ENCODE measurements at regions of chr11 and their contacts with region 1.

Region 1: DNA sequence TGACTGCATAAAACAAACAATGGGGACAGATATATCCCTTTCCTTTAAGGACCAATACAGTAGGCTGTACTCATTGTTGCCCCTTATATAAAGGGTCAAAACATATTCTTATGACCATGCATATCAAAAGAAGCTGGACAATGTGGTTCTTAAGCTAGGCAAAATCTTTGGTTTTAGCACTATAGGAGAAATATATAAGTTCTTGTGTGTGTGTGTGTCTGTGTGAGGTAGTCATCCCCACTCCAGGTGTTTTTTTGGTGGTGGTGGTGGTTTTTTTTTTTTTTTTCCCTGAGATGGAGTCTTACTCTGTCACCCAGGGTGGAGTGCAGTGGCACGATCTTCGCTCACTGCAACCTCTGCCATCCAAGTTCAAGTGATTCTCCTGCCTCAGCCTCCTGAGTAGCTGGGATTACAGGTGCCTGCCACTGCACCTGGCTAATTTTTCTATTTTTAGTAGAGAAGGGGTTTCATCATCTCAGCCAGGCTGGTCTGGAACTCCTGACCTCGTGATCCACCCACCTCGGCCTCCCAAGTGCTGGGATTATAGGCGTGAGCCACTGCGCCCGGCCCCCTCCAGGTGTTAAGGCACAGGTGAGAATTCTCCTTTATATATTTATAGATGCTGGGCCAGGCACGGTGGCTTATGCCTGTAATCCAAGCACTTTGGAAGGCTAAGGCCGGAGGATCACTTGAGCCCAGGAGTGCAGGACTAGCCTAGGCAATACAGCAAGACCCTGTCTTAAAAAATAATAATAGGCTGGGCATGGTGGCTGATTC is 12.0 kb upstream of the ZNF143 start:
- DNase-seq: no peak
- H3K4me3 ChIP-seq: no peak overlapping the region
- H3K4me1 ChIP-seq: no peaks in the 10 kb centered on the region; the same call in 1 of the 2 replicates
- H3K27me3 ChIP-seq: no peaks in the 10 kb centered on the region

Region 2: DNA sequence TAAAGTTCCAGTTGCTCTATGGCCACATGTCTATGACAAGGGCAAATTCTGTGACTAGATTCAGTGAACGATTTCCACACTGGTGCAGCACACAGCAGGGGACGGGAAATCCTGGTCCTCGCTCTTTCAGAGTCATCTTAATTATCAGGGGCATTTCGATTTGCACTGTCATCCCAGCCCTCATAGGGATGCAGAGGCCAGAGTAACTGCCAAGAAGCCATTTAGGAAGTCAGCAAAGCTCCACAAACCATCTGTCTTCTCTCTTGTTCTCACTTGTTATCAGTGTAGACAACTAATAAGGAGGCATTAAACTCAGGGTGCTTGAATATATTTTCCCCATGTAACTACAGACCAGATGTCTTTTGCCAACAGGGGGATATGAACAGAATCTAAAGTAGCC is 1006.5 kb before region 1 on chr11:
- in situ Hi-C with region 1: no loop called
- DNase-seq: no peak
- H3K4me3 ChIP-seq: no peak overlapping the region
- H3K4me1 ChIP-seq: no peaks in the 10 kb centered on the region
- H3K27me3 ChIP-seq: no peaks in the 10 kb centered on the region

Region 3: DNA sequence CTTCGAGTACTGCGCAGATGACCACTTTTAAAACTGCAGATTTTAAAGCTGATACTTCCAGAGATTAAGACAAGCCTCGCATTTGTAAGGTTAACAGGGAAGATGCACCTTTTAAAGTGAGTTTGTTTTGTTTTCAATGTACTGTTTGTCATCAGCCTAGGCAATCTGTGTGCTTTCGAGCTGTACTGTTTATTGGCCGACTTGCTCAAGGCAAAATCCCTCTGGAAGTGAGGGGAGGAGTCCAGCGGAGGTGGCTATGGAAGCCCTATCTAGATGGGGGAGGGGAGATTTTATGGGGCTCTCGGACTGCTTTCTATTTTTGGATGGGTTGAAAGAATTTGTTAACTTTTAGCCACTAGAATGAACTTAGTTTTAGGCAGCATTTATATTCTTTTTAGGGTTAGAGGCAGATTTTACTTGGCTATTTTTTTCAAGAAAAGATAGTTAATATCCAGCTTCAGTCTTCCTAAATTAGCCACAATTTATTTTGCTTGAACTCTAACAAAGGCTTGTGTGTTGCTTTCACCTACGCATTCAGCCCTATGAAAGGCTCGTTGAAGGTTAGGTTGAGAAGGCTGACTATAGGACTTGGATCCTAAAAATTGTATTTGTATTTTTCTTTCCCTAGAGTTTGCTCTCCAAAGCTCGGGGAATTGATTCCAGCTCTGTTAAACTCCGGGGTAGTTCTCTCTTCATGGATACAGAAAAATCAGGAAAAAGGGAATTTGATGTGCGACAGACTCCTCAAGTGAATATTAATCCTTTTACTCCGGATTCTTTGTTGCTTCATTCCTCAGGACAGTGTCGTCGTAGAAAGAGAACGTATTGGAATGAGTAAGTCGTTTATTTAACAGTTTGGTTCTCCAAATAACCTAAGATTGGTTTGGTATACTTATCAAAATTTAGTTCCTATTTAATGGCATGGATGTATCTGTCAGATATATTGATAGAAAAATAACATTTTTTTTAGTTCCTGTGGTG is 126.8 kb after region 1 on chr11:
- in situ Hi-C with region 1: loop called (anchors 25 kb)
- DNase-seq: peak; percentile 88 to 92
- H3K4me3 ChIP-seq: peak overlapping the region; percentile 79
- H3K4me1 ChIP-seq: peaks cover 51% of the 10 kb centered on the region
- H3K27me3 ChIP-seq: no peaks in the 10 kb centered on the region